ENCODE measurements at regions of chr3 and their contacts with region 1.

Region 1: GRCh38 chr3:15268033-15268631 is 62.1 kb downstream of the CAPN7 start:
- DNase-seq: peak; percentile 81
- CTCF ChIP-seq: peak; percentile 97

Region 2: GRCh38 chr3:15332405-15333098 is 64.4 kb after region 1 on chr3 and contains the start of gene SH3BP5:
- in situ Hi-C with region 1: loop called (anchors 10 kb)
- DNase-seq: peak; percentile 89
- CTCF ChIP-seq: peak; percentile 62

Region 3: GRCh38 chr3:15384510-15385237 is 116.5 kb after region 1 on chr3:
- in situ Hi-C with region 1: loop called (anchors 5 kb)
- DNase-seq: peak; percentile 54
- CTCF ChIP-seq: no peak

Region 4: GRCh38 chr3:15557511-15557946 is 289.4 kb after region 1 on chr3:
- in situ Hi-C with region 1: loop called (anchors 25 kb)
- DNase-seq: peak; percentile 39
- CTCF ChIP-seq: peak; percentile 43